ENCODE measurements at regions of chr6 and their contacts with region 1.

Region 1: GRCh38 chr6:33768644-33769120 is 20.2 kb downstream of the LEMD2 start:
- DNase-seq: peak; percentile 86
- ATAC-seq: peak; percentile 92
- H3K4me3 ChIP-seq: no peak overlapping the region
- H3K27ac ChIP-seq: no peak overlapping the region
- H3K4me1 ChIP-seq: peaks cover 2% of the 10 kb centered on the region; the same call in 1 of the 2 replicates
- H3K27me3 ChIP-seq: no peaks in the 10 kb centered on the region
- CTCF ChIP-seq: peak; percentile 84

Region 2: DNA sequence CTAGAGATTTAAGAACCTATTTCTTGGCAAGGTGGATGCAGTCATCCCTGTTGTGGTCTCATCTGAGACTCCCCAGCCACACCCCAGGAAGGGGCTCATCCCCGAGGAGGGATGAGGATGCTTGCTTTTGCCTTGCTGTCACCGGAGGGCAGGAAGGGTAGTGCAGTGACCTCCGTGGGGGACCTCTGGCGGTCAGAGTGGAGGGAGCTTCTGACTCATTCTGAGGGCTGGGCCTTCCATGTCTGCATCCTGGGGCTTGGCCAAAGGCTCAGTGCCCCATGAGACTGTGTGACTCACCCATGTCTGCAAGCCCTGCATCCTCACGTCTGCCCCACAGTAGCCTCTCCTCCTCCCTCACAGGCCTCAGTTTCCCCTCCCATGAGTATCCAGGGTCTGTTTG is 95.9 kb before region 1 on chr6:
- CTCF ChIA-PET with region 1: no interaction called
- POLR2A ChIA-PET with region 1: no interaction called
- intact Hi-C with region 1: no loop called
- DNase-seq: peak; percentile 93
- ATAC-seq: peak; percentile 76
- H3K4me3 ChIP-seq: no peak overlapping the region
- H3K27ac ChIP-seq: no peak overlapping the region
- H3K4me1 ChIP-seq: peaks cover 31% of the 10 kb centered on the region
- H3K27me3 ChIP-seq: no peaks in the 10 kb centered on the region
- CTCF ChIP-seq: peak; percentile 69

Region 3: DNA sequence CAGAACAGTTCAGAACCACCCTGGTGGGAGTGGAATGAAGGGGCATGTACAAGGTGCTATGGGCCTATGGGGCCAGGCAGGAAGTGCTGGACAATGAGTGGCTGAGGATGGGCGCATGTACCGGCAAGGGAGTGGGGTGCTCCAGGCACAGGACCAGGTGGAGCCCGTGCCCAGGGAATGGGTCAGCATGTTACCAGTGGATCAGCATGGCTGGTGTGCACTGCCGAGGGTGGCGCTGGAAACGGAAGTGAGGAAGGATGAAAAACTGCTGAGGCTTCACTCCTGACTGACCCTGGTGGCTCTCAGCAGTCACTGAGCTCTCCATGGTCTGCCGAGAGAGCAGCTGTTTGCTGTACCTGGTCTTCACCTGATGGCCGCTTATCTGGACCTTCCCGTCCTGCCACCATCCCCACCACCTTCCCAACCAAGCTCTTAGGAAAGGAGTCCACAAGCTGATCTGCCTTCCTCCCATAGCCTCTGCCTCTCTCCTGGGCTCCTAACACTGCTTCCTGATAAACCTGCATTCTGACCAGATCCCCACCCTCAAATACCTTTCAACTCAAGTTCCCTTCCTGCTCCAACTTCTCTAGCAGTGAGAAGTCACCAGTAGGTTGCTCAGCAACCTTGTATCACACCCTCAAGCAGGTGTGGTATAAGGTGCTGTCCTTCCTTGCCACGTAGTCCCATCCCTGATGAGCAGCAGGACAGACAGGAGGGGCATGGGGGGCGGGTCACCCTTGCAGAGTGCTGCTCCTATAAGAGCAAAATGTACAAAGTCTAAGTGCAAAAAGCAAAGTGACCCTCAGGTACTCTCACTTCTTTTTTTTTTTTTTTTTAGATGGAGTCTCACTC is 64.2 kb before region 1 on chr6:
- CTCF ChIA-PET with region 1: no interaction called
- POLR2A ChIA-PET with region 1: no interaction called
- intact Hi-C with region 1: no loop called
- DNase-seq: no peak
- ATAC-seq: no peak
- H3K4me3 ChIP-seq: no peak overlapping the region
- H3K27ac ChIP-seq: no peak overlapping the region
- H3K4me1 ChIP-seq: 0 out of 2 replicates have a peak, but pooled peaks cover 1% of the 10 kb centered on the region
- H3K27me3 ChIP-seq: no peaks in the 10 kb centered on the region
- CTCF ChIP-seq: no peak

Region 4: GRCh38 chr6:33788694-33789549 is 20.2 kb after region 1 on chr6 and contains the start of gene LEMD2:
- CTCF ChIA-PET with region 1: interaction called, 3 read pairs
- POLR2A ChIA-PET with region 1: interaction called, 4 read pairs
- intact Hi-C with region 1: loop called (anchors 1 kb)
- DNase-seq: peak; percentile 92
- ATAC-seq: peak; percentile 72
- H3K4me3 ChIP-seq: peak within 1 kb of the TSS; percentile 89
- H3K27ac ChIP-seq: peak within 1 kb of the TSS; percentile 54
- H3K4me1 ChIP-seq: peaks cover 35% of the 10 kb centered on the region
- H3K27me3 ChIP-seq: peaks cover 3% of the 10 kb centered on the region; the same call in 1 of the 2 replicates
- CTCF ChIP-seq: no peak
- total RNA-seq, gene LEMD2: 54.5 and 83.6 TPM in 2 replicates

Region 5: GRCh38 chr6:33975661-33976385 is 207.1 kb after region 1 on chr6:
- CTCF ChIA-PET with region 1: no interaction called
- POLR2A ChIA-PET with region 1: no interaction called
- intact Hi-C with region 1: no loop called
- DNase-seq: no peak
- ATAC-seq: no peak
- H3K4me3 ChIP-seq: no peak overlapping the region
- H3K27ac ChIP-seq: no peak overlapping the region
- H3K4me1 ChIP-seq: no peaks in the 10 kb centered on the region
- H3K27me3 ChIP-seq: peaks cover 4% of the 10 kb centered on the region; the same call in 1 of the 2 replicates
- CTCF ChIP-seq: no peak

Region 6: DNA sequence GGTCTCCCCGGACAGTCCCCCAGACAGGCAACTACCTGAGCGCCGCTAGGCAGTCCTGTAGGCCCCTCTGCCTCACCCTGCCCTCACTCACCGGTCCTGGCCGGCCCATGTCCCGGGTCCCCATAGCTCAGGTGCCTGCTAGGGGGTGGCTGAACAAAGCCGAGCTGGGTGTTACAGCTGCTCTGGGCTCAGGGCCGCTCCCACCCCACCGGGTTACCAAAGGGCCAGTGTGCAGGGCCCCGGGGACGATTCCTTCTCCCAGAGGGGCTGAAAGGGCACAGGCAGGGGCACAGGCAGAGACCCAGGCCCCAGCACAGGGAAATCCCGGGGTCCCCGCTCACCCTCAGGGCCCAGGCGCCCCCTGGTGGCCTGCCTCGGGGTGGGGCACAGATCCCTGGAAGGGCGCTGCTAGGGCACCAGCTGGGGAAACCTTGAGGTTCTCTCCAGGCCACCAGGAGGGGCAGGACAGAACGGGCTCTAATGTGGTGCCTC is 258.8 kb after region 1 on chr6:
- CTCF ChIA-PET with region 1: interaction called, 5 read pairs
- POLR2A ChIA-PET with region 1: no interaction called
- intact Hi-C with region 1: loop called (anchors 10 kb)
- DNase-seq: peak; percentile 54
- ATAC-seq: peak; percentile 74
- H3K4me3 ChIP-seq: no peak overlapping the region
- H3K27ac ChIP-seq: no peak overlapping the region
- H3K4me1 ChIP-seq: no peaks in the 10 kb centered on the region
- H3K27me3 ChIP-seq: 0 out of 2 replicates have a peak, but pooled peaks cover 12% of the 10 kb centered on the region
- CTCF ChIP-seq: peak; percentile 87

Region 7: GRCh38 chr6:34154668-34155447 is 386.2 kb after region 1 on chr6:
- CTCF ChIA-PET with region 1: no interaction called
- POLR2A ChIA-PET with region 1: no interaction called
- intact Hi-C with region 1: loop called (anchors 5 kb)
- DNase-seq: peak; percentile 52
- ATAC-seq: peak; percentile 78
- H3K4me3 ChIP-seq: peak overlapping the region; percentile 45
- H3K27ac ChIP-seq: no peak overlapping the region
- H3K4me1 ChIP-seq: peaks cover 3% of the 10 kb centered on the region; the same call in 1 of the 2 replicates
- H3K27me3 ChIP-seq: peaks cover 22% of the 10 kb centered on the region
- CTCF ChIP-seq: peak; percentile 94